ENCODE measurements at regions of chr15 and their contacts with region 1.

Region 1: DNA sequence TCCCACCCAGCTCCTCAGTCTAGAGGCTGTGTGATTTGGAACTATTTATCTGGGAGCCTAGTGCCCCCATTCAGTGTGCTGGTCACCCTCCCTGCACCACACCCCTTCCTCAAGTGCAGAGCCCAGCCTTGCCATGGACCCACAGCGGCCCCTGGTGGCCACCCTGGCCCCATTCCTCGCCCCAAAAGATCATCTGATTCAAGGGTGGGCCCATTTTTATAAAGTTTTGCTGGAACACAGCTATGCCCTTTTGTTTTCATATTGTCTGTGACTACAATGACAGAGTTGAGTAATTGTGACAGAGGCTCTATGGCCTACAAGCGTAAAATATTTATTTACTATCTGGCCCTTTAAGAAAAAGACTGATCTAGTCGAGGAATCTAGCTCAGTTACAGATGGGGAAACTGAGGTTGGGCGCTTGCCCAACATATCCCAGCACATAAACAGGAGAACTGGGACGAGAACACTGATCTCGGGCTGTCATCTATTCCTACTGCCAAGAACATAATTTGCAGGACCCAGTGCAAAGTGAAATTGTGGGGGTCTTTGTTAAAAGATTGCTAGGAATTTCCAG is 1.8 kb downstream of the FES start:
- DNase-seq: peak; percentile 79 to 81
- H3K4me3 ChIP-seq: no peak overlapping the region
- H3K27ac ChIP-seq: peak overlapping the region; percentile 96
- H3K4me1 ChIP-seq: peaks cover 0 to 12% of the 10 kb centered on the region in 2 donors
- H3K27me3 ChIP-seq: no peaks in the 10 kb centered on the region
- CTCF ChIP-seq: peak; percentile 92 to 99 (median 96)
- POLR2A ChIP-seq: no peak

Region 2: DNA sequence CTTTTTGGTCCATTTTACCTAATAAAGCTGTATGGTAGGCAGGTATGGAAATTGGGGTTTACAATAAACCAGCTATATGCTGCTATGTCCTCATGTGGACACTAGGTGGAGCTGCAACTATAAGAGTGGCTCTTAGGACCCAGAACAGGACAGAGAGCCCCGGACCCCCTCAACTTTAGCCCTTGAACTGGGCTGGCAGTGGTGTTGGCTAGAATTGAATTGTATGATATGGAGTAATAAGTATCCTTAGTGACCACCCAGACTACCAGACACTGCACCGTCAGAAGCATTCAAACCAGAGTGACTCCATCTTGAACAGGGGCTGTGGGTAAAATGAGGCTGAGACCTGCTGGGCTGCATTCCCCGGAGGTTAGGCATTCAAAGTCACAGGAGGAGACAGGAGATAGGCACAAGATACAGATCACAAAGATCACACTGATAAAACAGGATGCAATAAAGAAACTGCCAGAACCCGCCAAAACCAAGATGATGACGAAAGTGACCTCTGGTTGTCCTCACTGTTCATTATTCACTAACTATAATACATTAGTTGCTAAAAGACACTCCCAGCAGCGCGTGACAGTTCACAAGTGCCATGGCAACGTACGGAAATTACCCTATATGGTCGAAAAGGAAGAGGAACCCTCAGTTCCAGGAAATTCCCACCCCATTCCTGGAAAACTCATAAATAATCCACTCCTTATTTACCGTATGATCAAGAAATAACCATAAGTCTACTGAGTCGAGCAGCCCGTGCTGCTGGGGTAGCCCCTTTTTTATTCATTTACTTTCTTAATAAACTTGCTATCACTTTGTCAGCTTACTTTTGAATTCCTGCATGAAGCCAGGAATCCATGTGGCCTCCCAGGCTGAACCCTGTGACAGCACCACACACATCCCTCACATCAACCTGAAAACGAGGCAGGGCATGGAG is 237.7 kb before region 1 on chr15:
- intact Hi-C with region 1: loop called (anchors 5 kb)
- DNase-seq: peak; percentile 79 to 87
- H3K4me3 ChIP-seq: no peak overlapping the region
- H3K27ac ChIP-seq: peak overlapping the region; percentile 65 to 82
- H3K4me1 ChIP-seq: peaks cover 4% of the 10 kb centered on the region in 2 donors
- H3K27me3 ChIP-seq: no peaks in the 10 kb centered on the region
- CTCF ChIP-seq: peak; percentile 89 to 93 (median 92)
- POLR2A ChIP-seq: no peak

Region 3: GRCh38 chr15:90716976-90717821 is 168.9 kb before region 1 on chr15 and contains the start of gene BLM:
- intact Hi-C with region 1: loop called (anchors 10 kb)
- DNase-seq: peak; percentile 95 to 96
- H3K4me3 ChIP-seq: peak within 1 kb of the TSS; percentile 64 to 68
- H3K27ac ChIP-seq: peak within 1 kb of the TSS; percentile 88 to 89
- H3K4me1 ChIP-seq: peaks cover 3 to 7% of the 10 kb centered on the region in 2 donors
- H3K27me3 ChIP-seq: no peaks in the 10 kb centered on the region
- CTCF ChIP-seq: peak; percentile 14 to 65 (median 50)
- POLR2A ChIP-seq: peak; percentile 48 to 65
- total RNA-seq, gene BLM: 0.29 to 5.0 (median 0.48) TPM

Region 4: DNA sequence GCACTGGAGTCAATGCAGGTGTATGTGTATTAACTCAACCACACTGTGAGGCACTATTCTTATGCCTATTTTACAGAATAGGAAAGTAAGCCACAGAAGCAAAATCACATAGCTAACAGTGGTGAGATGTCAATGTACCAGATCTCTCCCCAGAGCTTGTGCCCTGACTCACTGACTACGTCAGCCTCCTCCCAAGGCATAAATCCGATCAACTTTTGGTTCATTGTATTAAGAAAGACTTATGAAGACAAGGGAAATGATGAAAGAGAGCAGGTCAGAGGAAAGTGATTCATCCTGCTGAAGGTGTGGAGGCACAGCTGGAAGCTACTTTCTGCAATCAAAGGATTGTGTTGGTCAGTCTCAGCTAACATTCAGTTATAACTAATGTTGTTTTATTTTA is 180.9 kb after region 1 on chr15:
- intact Hi-C with region 1: no loop called
- DNase-seq: no peak
- H3K4me3 ChIP-seq: no peak overlapping the region
- H3K27ac ChIP-seq: no peak overlapping the region
- H3K4me1 ChIP-seq: no peaks in the 10 kb centered on the region
- H3K27me3 ChIP-seq: peaks cover 0 to 6% of the 10 kb centered on the region in 2 donors
- CTCF ChIP-seq: no peak
- POLR2A ChIP-seq: no peak

Region 5: GRCh38 chr15:91271565-91272153 is 385.5 kb after region 1 on chr15:
- intact Hi-C with region 1: no loop called
- DNase-seq: peak; percentile 55
- H3K4me3 ChIP-seq: no peak overlapping the region
- H3K27ac ChIP-seq: no peak overlapping the region
- H3K4me1 ChIP-seq: no peaks in the 10 kb centered on the region
- H3K27me3 ChIP-seq: no peaks in the 10 kb centered on the region
- CTCF ChIP-seq: peak; percentile 76 to 83 (median 80)
- POLR2A ChIP-seq: no peak

Region 6: GRCh38 chr15:91652610-91653207 is 766.6 kb after region 1 on chr15:
- intact Hi-C with region 1: no loop called
- DNase-seq: no peak
- H3K4me3 ChIP-seq: no peak overlapping the region
- H3K27ac ChIP-seq: no peak overlapping the region
- H3K4me1 ChIP-seq: no peaks in the 10 kb centered on the region
- H3K27me3 ChIP-seq: no peaks in the 10 kb centered on the region
- CTCF ChIP-seq: no peak
- POLR2A ChIP-seq: no peak

Measured in uterus (tissue), 4 donors.